ENCODE measurements at regions of chr3 and their contacts with region 1.

Region 1: GRCh38 chr3:122982216-122983185 is 45.1 kb downstream of the SEMA5B start:
- DNase-seq: no peak
- H3K4me3 ChIP-seq: no peak overlapping the region
- H3K27ac ChIP-seq: no peak overlapping the region
- H3K4me1 ChIP-seq: peaks cover 8 to 19% of the 10 kb centered on the region in 2 donors
- H3K27me3 ChIP-seq: no peaks in the 10 kb centered on the region
- CTCF ChIP-seq: peak in 1 of 3 experiments; percentile 18

Region 2: DNA sequence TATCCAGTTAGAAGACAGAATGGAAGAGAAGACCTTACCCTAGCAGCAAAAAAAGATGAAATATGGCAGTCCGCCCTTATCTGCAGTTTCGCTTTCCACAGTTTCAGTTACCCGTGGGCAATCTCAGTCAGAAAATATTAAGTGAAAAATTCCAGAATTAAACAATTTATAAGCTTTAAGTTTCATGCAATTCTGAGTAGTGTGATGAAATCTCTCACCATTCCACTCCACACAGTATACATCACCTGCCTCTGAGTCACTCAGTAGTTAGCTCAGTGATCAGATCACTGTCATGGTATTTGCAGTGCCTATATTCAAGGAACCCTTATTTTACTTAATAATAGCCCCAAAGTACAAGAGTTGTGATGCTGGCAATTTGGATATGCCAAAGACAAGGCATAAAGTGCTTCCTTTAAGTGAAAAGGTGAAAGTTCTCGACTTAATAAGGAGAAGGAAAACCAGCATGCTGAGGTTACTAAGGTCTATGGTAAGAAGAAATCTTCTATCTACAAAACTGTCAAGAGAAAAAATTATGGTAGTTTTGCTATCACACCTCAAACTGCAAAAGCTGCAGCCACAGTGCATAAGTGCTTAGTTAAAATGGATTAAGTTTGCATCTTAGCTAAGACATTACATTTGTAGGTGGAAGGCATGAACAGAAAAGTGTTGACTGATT is 237.0 kb before region 1 on chr3:
- intact Hi-C with region 1: no loop called
- DNase-seq: no peak
- H3K4me3 ChIP-seq: no peak overlapping the region
- H3K27ac ChIP-seq: no peak overlapping the region
- H3K4me1 ChIP-seq: no peaks in the 10 kb centered on the region
- H3K27me3 ChIP-seq: no peaks in the 10 kb centered on the region
- CTCF ChIP-seq: no peak

Region 3: GRCh38 chr3:122996038-122996580 is 13.6 kb after region 1 on chr3:
- intact Hi-C with region 1: loop called (anchors 2 kb)
- DNase-seq: peak in 1 of 2 donors; percentile 64
- H3K4me3 ChIP-seq: no peak overlapping the region
- H3K27ac ChIP-seq: peak overlapping the region; percentile 58 to 71
- H3K4me1 ChIP-seq: peaks cover 6 to 17% of the 10 kb centered on the region in 2 donors
- H3K27me3 ChIP-seq: no peaks in the 10 kb centered on the region
- CTCF ChIP-seq: no peak

Region 4: GRCh38 chr3:123053106-123053505 is 70.6 kb after region 1 on chr3:
- intact Hi-C with region 1: no loop called
- DNase-seq: no peak
- H3K4me3 ChIP-seq: no peak overlapping the region
- H3K27ac ChIP-seq: peak overlapping the region; percentile 16 to 77
- H3K4me1 ChIP-seq: peaks cover 7 to 19% of the 10 kb centered on the region in 2 donors
- H3K27me3 ChIP-seq: no peaks in the 10 kb centered on the region
- CTCF ChIP-seq: no peak

Measured in ascending aorta (tissue), 2 donors.